ENCODE measurements at regions of chr15 and their contacts with region 1.

Region 1: DNA sequence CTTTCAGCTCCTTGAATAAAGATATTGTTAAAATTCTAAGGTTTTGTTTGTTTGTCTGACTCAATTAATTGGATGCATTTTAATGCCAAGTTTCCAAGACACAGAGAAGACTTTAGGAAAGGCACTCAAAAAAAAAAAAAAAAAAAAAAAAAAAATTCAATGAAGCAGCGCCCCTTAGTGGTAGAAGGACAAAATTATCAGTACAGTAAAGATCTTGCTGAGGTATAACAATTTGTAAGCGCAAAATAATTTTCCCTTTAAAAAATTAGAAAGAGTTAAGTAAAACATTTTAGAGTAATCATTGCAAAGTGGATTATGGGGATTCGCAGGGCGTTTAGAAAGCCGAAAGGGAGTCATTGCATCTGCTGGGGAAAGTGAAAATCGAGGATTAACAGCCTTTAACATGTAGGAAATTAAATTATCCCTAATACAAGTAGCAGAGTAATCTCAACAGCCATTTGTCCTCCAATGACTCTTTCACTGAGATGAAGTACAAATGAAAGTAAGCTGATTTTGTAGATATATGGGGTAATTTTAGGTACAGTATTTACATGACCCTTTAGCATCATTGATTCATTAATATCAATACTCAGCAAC is 5.8 kb upstream of the DIS3L start:
- DNase-seq: no peak
- H3K4me3 ChIP-seq: no peak overlapping the region
- H3K27ac ChIP-seq: no peak overlapping the region
- H3K27me3 ChIP-seq: peaks cover 7% of the 10 kb centered on the region
- CTCF ChIP-seq: peak; percentile 66

Region 2: DNA sequence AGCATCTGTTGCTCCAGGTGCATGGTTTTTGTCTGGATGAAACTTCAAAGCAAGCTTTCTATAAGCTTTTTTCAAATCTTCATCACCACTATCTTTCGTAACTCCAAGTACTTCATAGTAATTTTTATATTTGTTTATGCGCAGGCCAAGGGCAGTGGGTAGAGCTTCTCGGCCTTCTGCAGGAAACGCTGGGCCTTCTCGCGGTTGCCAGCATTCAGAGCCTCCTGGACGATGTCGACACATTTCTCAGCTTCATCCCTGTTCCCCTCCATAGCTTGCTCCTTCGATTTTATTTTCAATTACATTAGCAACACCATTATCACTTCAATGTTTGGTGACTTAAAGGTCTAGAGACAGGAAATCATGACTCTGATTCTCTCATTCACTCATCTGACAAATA is 515.7 kb before region 1 on chr15:
- CTCF ChIA-PET with region 1: interaction called, 10 read pairs
- POLR2A ChIA-PET with region 1: no interaction called
- DNase-seq: no peak
- H3K4me3 ChIP-seq: no peak overlapping the region
- H3K27ac ChIP-seq: no peak overlapping the region
- H3K27me3 ChIP-seq: no peaks in the 10 kb centered on the region
- CTCF ChIP-seq: no peak

Region 3: GRCh38 chr15:65979316-65979715 is 308.2 kb before region 1 on chr15:
- CTCF ChIA-PET with region 1: interaction called, 20 read pairs
- POLR2A ChIA-PET with region 1: no interaction called
- DNase-seq: no peak
- H3K4me3 ChIP-seq: no peak overlapping the region
- H3K27ac ChIP-seq: no peak overlapping the region
- H3K27me3 ChIP-seq: peaks cover 48% of the 10 kb centered on the region
- CTCF ChIP-seq: no peak

Region 4: DNA sequence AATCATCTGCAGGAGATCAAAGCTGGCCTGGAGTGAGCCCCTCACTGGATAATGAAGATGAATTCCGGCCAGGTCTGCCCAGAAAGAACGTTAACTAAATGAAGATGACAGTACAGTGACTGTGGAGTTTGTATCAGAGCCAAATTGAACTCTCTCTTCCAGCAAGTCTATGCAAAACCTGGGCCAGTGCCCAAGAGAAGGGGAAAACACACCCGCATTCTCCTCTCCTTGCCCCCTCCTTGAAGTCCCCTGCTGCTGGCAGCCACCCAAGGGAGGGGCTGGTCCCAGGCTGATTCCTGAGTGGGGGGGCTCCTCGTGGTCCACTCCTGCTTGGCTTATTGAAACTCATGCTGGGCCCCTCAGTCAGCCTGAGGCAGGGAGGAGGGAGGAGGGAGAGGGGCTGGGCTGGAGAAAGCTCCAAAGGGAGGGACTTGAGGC is 262.5 kb before region 1 on chr15:
- CTCF ChIA-PET with region 1: no interaction called
- POLR2A ChIA-PET with region 1: no interaction called
- DNase-seq: no peak
- H3K4me3 ChIP-seq: no peak overlapping the region
- H3K27ac ChIP-seq: no peak overlapping the region
- H3K27me3 ChIP-seq: peaks cover 15% of the 10 kb centered on the region
- CTCF ChIP-seq: no peak

Region 5: DNA sequence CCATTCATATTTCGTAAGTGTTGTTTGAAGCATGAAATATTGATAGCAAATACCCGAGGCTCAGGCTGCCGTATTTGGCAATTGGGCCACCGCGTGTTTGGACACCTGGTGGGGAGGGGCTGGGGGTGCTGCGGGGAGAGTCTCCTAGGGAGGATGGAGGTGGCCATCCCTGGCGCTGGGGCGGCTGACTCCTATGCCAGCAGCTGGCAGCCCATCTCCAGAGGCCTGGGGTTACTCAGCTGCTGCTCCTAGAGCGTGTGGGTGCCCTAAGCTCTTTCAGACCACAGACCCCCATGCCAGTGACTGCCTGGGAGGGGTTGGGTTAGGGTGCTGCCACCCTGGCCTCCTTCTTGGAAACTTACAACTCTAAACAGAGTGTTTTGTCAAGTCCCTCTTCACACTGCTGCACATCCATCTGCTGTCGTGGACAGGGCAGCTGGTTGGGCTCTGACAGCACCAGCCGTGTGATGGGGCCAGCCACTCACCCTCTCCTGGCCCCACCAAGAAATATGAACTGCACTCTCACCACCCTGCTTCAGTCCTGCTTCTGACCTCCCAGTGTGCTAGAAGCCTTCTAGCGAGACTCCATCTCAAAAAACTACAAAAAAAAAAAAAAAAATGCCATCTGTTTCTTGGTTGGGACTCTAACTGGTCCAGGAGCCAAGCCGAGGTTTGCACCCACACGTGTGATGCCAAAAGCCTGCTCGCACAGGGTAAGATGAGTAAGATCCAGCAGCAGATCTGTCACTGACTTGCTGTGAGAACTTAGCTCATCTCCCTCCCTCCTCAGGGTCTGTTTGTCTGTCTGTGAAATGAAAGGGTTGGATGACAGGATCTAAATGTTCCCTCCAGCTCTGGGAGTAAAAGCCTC is 190.2 kb before region 1 on chr15:
- CTCF ChIA-PET with region 1: interaction called, 11 read pairs
- POLR2A ChIA-PET with region 1: no interaction called
- DNase-seq: no peak
- H3K4me3 ChIP-seq: no peak overlapping the region
- H3K27ac ChIP-seq: no peak overlapping the region
- H3K27me3 ChIP-seq: peaks cover 29% of the 10 kb centered on the region
- CTCF ChIP-seq: no peak

Region 6: DNA sequence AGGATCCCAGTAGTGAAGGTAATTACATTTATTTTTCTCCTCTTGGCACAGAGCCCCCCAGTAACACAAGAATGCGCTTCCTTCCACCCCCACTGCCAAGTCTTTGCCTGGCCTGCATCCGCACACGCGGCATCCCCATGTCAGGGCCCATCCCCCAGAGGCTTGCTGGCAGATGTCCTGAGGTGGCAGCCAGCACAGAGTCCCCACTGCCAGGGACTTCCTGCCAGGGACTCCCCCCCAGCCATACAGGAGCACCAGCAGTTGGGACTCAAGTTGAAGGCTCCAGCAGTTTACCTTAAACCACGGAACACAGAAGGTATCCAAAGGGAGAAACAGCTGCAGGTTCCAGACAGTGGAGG is 75.0 kb before region 1 on chr15:
- CTCF ChIA-PET with region 1: interaction called, 12 read pairs
- POLR2A ChIA-PET with region 1: no interaction called
- DNase-seq: no peak
- H3K4me3 ChIP-seq: no peak overlapping the region
- H3K27ac ChIP-seq: no peak overlapping the region
- H3K27me3 ChIP-seq: peaks cover 23% of the 10 kb centered on the region
- CTCF ChIP-seq: no peak

Region 7: GRCh38 chr15:66251790-66252684 is 35.5 kb before region 1 on chr15:
- CTCF ChIA-PET with region 1: interaction called, 14 read pairs
- POLR2A ChIA-PET with region 1: no interaction called
- DNase-seq: no peak
- H3K4me3 ChIP-seq: peak overlapping the region; percentile 43
- H3K27ac ChIP-seq: no peak overlapping the region
- H3K27me3 ChIP-seq: peaks cover 77% of the 10 kb centered on the region
- CTCF ChIP-seq: peak; percentile 73